Activated CD8-positive, alpha-beta T cell treated with anti-CD3 and anti-CD28 coated beads, Interleukin-2, amount 10 ng/mL, durations not matched to agents 7 days and 5 days (primary cell): ENCODE measurements at regions of chr9 and their contacts with region 1.

Region 1: DNA sequence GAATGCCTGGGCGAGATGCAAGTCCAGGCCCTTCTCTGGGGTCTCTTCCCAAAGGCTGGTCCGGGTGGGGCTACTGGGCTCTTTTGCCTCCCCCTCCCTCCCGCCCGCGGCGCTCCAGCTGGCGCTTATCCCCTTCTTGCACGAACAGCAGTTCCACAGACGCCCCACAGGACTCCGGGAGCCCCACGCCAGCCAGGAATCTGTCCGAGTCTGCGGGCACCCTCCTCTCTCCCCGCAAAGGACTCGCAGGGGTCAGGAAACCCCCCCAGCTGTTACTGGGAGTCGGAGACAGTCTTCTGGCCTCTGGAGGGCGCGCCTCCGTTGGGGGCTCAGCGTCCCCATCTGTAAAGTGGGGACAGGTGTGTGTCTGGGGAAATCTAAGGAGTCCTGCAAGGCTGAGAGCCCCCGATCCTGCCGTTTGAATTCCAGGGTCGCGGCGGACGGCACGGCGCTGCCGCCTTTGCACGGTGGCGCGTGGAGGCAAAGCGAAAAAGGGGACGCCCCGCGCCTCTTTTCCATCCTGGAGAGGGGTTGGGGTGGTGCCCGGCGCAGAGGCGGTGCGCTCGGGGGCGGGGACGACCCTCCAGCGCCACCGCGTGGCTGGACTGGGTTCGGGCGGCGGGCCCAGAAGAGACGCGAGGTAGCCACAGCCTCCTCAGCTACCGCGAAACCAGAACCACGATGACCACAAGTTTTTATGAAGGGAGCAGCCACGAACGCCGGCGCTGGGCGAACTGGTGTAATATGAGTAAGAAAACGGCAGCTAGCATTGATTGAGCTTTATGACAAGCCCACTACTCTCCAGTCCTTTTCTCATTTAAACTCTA is 2.9 kb upstream of the CCIN start:
- DNase-seq: peak; percentile 88
- ATAC-seq: peak; percentile 98
- H3K4me3 Mint-ChIP-seq: peak overlapping the region; percentile 72
- H3K27ac Mint-ChIP-seq: peak overlapping the region; percentile 69
- H3K4me1 Mint-ChIP-seq: peaks cover 19% of the 10 kb centered on the region
- H3K27me3 Mint-ChIP-seq: peaks cover 14% of the 10 kb centered on the region

Region 2: GRCh38 chr9:36008774-36009300 is 157.5 kb before region 1 on chr9:
- CTCF ChIA-PET with region 1: interaction called, 12 read pairs
- POLR2A ChIA-PET with region 1: no interaction called
- DNase-seq: peak; percentile 84
- ATAC-seq: peak; percentile 99
- H3K4me3 Mint-ChIP-seq: no peak overlapping the region
- H3K27ac Mint-ChIP-seq: no peak overlapping the region
- H3K4me1 Mint-ChIP-seq: peaks cover 10% of the 10 kb centered on the region
- H3K27me3 Mint-ChIP-seq: peaks cover 51% of the 10 kb centered on the region

Region 3: DNA sequence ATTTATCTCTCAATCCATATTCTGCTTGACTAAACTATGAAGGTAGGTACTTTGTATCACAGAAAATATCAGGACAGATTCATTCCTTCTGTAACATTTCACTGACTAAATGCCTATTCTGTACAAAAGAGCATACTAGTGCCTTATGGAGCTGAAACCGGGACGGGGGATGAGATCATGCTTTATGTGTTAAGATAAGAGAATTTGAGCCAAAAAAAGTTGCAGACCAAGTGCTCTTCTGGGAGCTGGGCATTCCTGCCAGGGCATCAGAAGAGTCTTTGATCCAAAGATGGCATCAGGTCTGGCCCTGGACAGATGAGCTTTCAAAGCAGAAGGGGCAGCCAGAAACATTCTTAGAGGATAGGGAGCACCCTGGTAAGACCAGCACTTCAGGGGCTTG is 57.2 kb before region 1 on chr9:
- CTCF ChIA-PET with region 1: interaction called, 304 read pairs
- POLR2A ChIA-PET with region 1: no interaction called
- DNase-seq: no peak
- ATAC-seq: no peak
- H3K4me3 Mint-ChIP-seq: no peak overlapping the region
- H3K27ac Mint-ChIP-seq: no peak overlapping the region
- H3K4me1 Mint-ChIP-seq: no peaks in the 10 kb centered on the region
- H3K27me3 Mint-ChIP-seq: no peaks in the 10 kb centered on the region

Region 4: DNA sequence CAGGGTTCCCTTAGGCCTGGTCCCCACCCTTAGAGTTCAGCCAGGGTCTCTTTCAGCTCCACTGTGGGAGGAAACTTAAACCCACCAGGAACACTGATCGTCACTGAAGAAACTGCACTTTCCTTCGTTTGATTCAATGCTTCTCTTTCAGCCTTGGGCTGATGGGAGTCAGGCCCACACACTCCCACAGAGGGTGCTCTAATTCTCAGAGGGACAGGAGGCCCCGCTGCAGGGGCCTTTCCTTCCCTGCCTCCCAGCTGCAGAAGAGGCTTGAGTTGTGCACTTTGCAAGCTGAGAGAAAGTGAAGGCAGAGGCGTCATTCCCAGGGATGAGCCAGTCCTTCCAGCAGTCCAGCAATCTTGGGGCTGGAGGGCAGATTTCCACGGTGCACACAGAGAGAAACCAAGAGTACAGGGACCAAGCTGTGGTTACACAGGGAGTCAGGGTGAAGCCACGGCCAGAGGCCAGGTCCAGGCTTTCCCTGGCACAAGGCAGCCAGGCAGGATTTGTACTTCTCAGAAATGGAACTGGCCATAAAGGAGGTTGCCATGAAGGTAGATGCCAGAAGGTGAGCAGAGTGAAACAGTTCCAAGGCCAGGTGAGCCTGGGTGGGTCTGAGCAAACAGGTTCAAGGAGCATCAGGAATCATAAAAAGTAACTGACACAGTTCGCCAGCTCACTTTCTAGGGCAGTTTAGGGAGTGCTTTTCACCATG is 40.1 kb before region 1 on chr9:
- CTCF ChIA-PET with region 1: interaction called, 17 read pairs
- POLR2A ChIA-PET with region 1: no interaction called
- DNase-seq: no peak
- ATAC-seq: no peak
- H3K4me3 Mint-ChIP-seq: no peak overlapping the region
- H3K27ac Mint-ChIP-seq: no peak overlapping the region
- H3K4me1 Mint-ChIP-seq: peaks cover 33% of the 10 kb centered on the region
- H3K27me3 Mint-ChIP-seq: no peaks in the 10 kb centered on the region

Region 5: GRCh38 chr9:36148311-36149051 is 17.8 kb before region 1 on chr9:
- CTCF ChIA-PET with region 1: interaction called, 22 read pairs
- POLR2A ChIA-PET with region 1: interaction called, 7 read pairs
- DNase-seq: peak; percentile 77
- ATAC-seq: peak; percentile 40
- H3K4me3 Mint-ChIP-seq: no peak overlapping the region
- H3K27ac Mint-ChIP-seq: peak overlapping the region; percentile 75
- H3K4me1 Mint-ChIP-seq: peaks cover 89% of the 10 kb centered on the region
- H3K27me3 Mint-ChIP-seq: no peaks in the 10 kb centered on the region